Cardiac septum (tissue), 1 donor: ENCODE measurements at regions of chr9 and their contacts with region 1.

Region 1: DNA sequence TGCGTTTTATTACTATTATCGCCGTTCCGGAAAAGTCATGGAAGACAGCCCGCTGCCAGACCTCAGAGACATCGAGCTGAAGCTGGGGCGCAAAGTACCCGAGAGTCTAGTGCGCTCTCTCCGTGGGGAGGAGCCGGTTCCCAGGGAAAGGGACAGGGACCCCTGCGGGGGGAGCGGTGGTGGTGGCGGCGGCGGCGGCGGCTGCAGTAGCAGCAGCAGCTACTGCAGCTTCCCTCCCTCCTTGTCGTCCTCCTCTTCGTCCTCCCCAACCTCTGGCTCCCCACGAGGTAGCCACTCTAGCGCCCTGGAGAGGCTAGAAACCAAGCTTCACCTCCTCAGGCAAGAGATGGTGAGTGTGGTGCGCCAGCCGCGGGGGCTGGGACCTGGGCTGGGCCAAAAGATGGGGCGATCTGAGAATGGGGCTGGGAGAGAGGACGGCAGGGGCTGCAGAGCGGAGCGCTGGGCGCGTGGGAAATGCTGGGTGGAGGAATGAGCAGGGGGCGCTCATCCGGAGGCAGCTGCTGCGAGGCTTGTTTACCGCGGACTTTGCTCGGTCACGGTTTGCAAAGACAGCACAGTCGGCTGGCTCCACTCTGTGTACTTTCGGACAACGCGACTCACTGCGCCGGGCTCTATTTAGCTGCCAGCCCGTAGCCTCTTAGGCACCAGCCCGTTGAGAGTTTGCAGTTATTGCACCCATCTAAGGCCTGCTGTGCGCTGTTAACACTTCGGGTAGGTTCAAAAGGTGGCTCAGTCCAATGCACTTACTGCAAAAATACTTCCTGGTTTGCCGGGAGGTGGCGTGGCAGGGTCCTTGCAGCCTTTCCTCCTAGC is 1.1 kb downstream of the LURAP1L start:
- DNase-seq: no peak

Region 2: GRCh38 chr9:12516573-12516972 is 259.3 kb before region 1 on chr9:
- intact Hi-C with region 1: no loop called
- DNase-seq: no peak

Region 3: GRCh38 chr9:12813960-12814876 is 38.3 kb after region 1 on chr9:
- intact Hi-C with region 1: loop called (anchors 2 kb)
- DNase-seq: no peak

Region 4: DNA sequence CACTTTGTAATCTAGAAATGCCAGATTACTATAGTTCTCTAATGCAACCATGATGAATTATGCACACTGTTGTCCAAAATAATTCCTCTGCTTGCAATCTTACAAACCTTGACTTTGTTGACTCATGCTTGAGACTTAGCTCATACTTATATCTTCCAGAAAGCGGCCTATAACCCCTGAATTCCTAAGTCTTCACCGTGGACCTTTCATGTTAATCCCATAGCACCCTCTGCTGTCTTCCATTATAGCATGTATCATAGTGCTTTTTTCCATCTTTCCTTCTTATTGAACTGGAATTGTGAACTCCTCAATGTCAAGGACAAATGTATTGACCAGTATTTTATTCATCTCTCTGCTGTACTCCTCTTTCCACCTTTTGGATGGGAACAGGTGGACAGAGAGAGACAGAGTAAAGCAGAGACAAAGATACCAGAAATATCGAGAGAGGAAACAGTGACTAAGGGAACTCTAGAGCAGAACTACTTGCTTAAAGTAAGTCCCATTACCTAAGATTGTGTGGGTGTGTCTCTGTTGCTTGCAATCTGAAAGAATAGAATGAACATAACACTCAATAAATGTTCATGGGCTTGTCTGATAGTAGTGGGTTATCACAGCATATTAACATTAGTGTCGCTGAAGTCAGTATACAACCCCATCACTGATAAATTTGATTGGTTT is 109.0 kb after region 1 on chr9:
- intact Hi-C with region 1: loop called (anchors 5 kb)
- DNase-seq: no peak